ENCODE measurements at regions of chrX and their contacts with region 1.

Region 1: GRCh38 chrX:136168929-136169735 is 21.8 kb downstream of the FHL1 start:
- DNase-seq: peak; percentile 36
- H3K4me3 ChIP-seq: no peak overlapping the region
- H3K27ac ChIP-seq: peak overlapping the region; percentile 6
- H3K4me1 ChIP-seq: no peaks in the 10 kb centered on the region
- H3K27me3 ChIP-seq: no peaks in the 10 kb centered on the region
- CTCF ChIP-seq: no peak

Region 2: GRCh38 chrX:136209016-136209738 is 40.0 kb after region 1 on chrX:
- intact Hi-C with region 1: loop called (anchors 5 kb)
- DNase-seq: peak; percentile 42
- H3K4me3 ChIP-seq: no peak overlapping the region
- H3K27ac ChIP-seq: no peak overlapping the region
- H3K4me1 ChIP-seq: no peaks in the 10 kb centered on the region
- H3K27me3 ChIP-seq: no peaks in the 10 kb centered on the region
- CTCF ChIP-seq: peak; percentile 43

Region 3: GRCh38 chrX:136268051-136269048 is 99.2 kb after region 1 on chrX:
- intact Hi-C with region 1: loop called (anchors 5 kb)
- DNase-seq: peak; percentile 47
- H3K4me3 ChIP-seq: no peak overlapping the region
- H3K27ac ChIP-seq: no peak overlapping the region
- H3K4me1 ChIP-seq: no peaks in the 10 kb centered on the region
- H3K27me3 ChIP-seq: no peaks in the 10 kb centered on the region
- CTCF ChIP-seq: peak; percentile 75

Measured in colonic mucosa (tissue), 4 donors.